ENCODE measurements at regions of chr2 and their contacts with region 1.

Region 1: GRCh38 chr2:121710470-121711170 is 26.1 kb downstream of the NIFK start:
- DNase-seq: no peak
- ATAC-seq: no peak
- H3K4me3 Mint-ChIP-seq: no peak overlapping the region
- H3K27ac Mint-ChIP-seq: no peak overlapping the region
- H3K4me1 Mint-ChIP-seq: no peaks in the 10 kb centered on the region
- H3K27me3 Mint-ChIP-seq: no peaks in the 10 kb centered on the region
- CTCF ChIP-seq: no peak

Region 2: DNA sequence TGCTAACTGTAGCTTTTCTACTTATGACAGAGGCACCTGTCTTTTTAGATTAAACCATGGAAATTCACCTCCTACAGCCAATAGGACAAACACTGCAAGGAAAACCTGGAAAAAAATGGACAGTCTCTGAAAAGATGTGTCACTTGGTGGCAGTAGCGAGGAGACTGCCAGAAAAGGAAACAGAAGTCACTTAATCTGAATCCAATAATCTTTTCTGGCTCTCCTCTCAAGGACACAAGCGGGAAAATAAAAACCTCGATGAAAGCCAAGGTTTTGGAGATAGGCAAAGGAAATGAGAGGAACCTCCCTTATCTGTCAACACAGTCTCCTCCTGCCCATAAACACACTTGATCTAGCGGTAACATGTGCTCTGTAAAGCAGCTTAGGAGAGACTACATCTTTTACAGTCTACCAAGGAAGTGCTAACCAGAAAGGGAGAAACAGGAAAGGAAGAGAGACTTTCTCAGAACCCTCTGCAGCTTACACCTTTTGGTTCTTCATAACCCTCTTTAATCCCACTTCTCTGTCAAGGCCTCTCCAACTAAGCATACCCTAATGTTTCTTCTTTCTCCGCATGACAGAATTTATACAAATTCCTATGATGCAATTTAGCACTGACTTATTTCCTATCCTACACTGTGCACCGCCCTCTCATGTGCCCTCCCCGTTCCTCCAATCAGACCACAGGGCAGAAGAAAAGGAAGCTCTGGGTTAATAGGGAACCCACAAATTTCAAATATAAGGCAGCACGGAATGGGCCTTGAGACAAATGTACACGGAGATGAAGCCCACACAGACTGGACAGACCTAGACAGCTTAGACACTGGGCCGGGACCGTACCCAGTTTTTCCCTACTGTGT is 114.2 kb before region 1 on chr2:
- CTCF ChIA-PET with region 1: no interaction called
- POLR2A ChIA-PET with region 1: no interaction called
- intact Hi-C with region 1: loop called (anchors 10 kb)
- DNase-seq: peak; percentile 60
- ATAC-seq: peak; percentile 92
- H3K4me3 Mint-ChIP-seq: peak overlapping the region; percentile 77
- H3K27ac Mint-ChIP-seq: peak overlapping the region; percentile 94
- H3K4me1 Mint-ChIP-seq: peaks cover 47% of the 10 kb centered on the region
- H3K27me3 Mint-ChIP-seq: no peaks in the 10 kb centered on the region
- CTCF ChIP-seq: no peak

Measured in activated CD8-positive, alpha-beta T cell treated with anti-CD3 and anti-CD28 coated beads for 36 hours (primary cell).